ENCODE measurements at regions of chr4 and their contacts with region 1.

Region 1: GRCh38 chr4:174377613-174378012 is 93.9 kb downstream of the CEP44 start:
- DNase-seq: no peak
- H3K4me3 ChIP-seq: no peak overlapping the region
- H3K27ac ChIP-seq: no peak overlapping the region
- H3K27me3 ChIP-seq: no peaks in the 10 kb centered on the region
- CTCF ChIP-seq: no peak

Region 2: DNA sequence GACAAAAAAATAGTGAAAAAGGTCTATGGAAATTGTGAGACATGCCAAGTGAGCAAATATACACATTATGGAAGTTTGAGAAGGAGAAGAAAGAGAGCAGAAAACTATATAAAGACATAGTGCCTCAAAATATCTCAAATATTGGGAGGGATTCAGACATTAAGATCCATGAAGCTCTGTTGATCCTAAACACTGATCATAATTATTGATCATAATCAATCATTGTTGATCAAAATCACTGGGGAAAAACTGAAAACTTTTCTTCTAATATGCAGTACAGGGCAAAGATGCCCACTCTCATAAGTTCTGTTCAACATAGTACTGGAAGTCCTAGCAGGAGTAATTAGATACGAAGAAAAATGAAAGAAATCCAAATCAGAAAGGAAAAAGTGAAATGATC is 1145.0 kb after region 1 on chr4:
- intact Hi-C with region 1: loop called in 1 of 2 experiments (anchors 10 kb)
- DNase-seq: no peak
- H3K4me3 ChIP-seq: no peak overlapping the region
- H3K27ac ChIP-seq: no peak overlapping the region
- H3K27me3 ChIP-seq: no peaks in the 10 kb centered on the region
- CTCF ChIP-seq: no peak

Measured in dorsolateral prefrontal cortex (tissue), 120 donors.